Common myeloid progenitor, CD34-positive (primary cell): ENCODE measurements at regions of chr14 and their contacts with region 1.

Region 1: GRCh38 chr14:47539031-47539461 is 136.4 kb downstream of the MDGA2 start:
- DNase-seq: peak; percentile 15 to 38 (median 25)
- H3K4me3 ChIP-seq: peak overlapping the region in 1 of 7 experiments; percentile 58
- H3K27ac ChIP-seq: no peak overlapping the region
- H3K4me1 ChIP-seq: no peaks in the 10 kb centered on the region
- H3K27me3 ChIP-seq: no peaks in the 10 kb centered on the region

Region 2: GRCh38 chr14:47483449-47483848 is 55.6 kb before region 1 on chr14:
- CTCF ChIA-PET with region 1: no interaction called
- POLR2A ChIA-PET with region 1: no interaction called
- DNase-seq: no peak
- H3K4me3 ChIP-seq: no peak overlapping the region
- H3K27ac ChIP-seq: no peak overlapping the region
- H3K4me1 ChIP-seq: no peaks in the 10 kb centered on the region
- H3K27me3 ChIP-seq: no peaks in the 10 kb centered on the region

Region 3: DNA sequence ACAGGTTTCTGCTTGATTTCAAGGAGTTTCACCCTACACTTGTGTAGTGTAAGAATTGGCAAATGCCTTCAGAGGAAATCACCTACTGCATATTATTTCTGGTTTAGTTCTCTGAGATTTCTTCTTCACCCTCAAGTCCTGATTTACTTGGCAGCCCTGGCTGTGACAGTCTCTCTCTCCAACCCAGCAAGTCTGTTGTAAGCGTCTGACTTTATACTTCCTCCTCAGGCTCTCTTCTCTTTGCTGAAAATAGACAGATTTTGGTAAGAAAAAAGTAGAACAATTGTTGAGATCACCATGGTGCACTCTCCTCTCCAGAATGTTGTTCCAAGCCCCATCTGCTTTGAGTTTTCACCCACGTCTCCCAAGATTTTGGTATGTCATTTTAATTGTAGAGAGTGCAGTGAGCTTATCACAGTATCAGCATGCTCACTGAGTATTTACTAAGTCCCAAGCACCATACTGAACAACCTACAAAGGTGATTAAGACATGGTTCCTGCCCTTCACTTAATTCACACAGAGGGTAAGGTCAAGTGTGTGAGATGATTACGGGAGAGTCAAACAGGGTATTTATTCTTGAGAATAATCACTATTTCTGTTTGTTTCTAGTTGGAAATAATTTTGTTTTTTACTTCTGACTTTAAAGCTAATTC is 12.3 kb before region 1 on chr14:
- CTCF ChIA-PET with region 1: interaction called, 11 read pairs
- POLR2A ChIA-PET with region 1: no interaction called
- DNase-seq: no peak
- H3K4me3 ChIP-seq: no peak overlapping the region
- H3K27ac ChIP-seq: no peak overlapping the region
- H3K4me1 ChIP-seq: no peaks in the 10 kb centered on the region
- H3K27me3 ChIP-seq: no peaks in the 10 kb centered on the region